Activated CD4-positive, alpha-beta memory T cell treated with anti-CD3 and anti-CD28 coated beads, Interleukin-2, amount 10 ng/mL, durations not matched to agents 7 days and 5 days (primary cell): ENCODE measurements at regions of chr15 and their contacts with region 1.

Region 1: GRCh38 chr15:51776952-51777574 is 25.7 kb downstream of the TMOD2 start:
- DNase-seq: peak; percentile 68
- H3K4me3 Mint-ChIP-seq: no peak overlapping the region
- H3K27ac Mint-ChIP-seq: no peak overlapping the region
- H3K4me1 Mint-ChIP-seq: peaks cover 4% of the 10 kb centered on the region
- H3K27me3 Mint-ChIP-seq: no peaks in the 10 kb centered on the region

Region 2: DNA sequence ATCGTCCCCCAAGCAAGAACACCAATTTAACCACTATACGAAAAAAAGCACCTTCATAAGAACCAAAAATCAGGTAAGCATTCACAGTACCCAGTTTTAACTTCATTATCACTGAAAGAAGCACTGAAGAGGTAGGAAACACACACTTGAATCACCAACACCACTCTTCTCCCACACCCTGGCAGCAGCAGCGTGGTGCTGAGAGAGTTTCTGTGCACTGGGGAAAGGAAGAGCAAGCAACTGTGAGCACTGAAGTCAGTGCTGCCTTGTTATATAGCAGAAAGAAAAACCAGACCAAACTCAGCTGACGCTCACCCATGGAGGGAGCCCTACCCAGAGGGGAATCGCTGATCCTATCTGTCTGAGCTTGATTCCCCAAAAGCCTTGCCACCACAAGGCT is 252.7 kb before region 1 on chr15:
- CTCF ChIA-PET with region 1: no interaction called
- POLR2A ChIA-PET with region 1: no interaction called
- DNase-seq: no peak
- H3K4me3 Mint-ChIP-seq: no peak overlapping the region
- H3K27ac Mint-ChIP-seq: no peak overlapping the region
- H3K4me1 Mint-ChIP-seq: no peaks in the 10 kb centered on the region
- H3K27me3 Mint-ChIP-seq: no peaks in the 10 kb centered on the region

Region 3: GRCh38 chr15:51621936-51622603 is 155.0 kb before region 1 on chr15:
- CTCF ChIA-PET with region 1: interaction called, 15 read pairs
- POLR2A ChIA-PET with region 1: no interaction called
- DNase-seq: peak; percentile 35
- H3K4me3 Mint-ChIP-seq: peak overlapping the region; percentile 85
- H3K27ac Mint-ChIP-seq: no peak overlapping the region
- H3K4me1 Mint-ChIP-seq: peaks cover 14% of the 10 kb centered on the region
- H3K27me3 Mint-ChIP-seq: peaks cover 28% of the 10 kb centered on the region

Region 4: DNA sequence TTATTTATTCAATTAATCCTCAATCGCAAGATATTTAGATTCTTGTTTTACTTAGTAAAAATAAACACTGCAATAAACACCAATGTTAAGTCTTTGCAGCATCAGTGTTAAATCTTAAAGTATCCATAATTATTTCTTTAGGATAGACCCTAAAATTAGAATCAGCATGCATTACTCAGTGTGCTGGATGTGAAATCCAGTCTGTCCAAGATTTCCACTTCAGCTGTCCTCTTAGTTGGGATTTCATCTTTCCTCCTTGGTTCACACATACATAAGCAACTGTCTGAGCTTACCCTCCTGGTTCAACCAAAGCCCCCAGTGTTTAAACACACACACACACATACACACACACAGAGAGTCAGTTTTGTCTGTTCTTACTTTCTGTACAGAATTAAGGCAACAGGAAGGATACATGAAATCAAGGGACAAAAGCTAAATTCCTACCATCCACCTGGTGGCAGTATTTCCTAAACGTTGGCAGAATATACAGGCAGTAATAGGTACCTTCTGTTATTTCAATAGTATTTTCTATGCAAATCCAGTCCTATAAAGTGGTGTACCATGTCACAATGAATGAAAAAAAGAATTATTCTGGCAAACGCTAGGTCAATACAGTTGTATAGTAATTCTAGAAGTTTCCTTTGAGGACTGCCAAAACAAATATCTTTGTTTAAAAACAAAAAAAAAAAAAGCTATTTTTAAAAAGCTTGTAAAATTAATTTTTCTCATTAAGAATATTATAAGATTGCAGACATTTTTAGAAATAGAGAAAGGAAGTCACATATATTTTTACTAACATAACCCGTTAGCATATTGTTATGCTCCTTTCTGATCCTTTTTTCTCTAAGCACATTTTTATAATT is 127.2 kb before region 1 on chr15:
- CTCF ChIA-PET with region 1: interaction called, 230 read pairs
- POLR2A ChIA-PET with region 1: interaction called, 13 read pairs
- DNase-seq: peak; percentile 32
- H3K4me3 Mint-ChIP-seq: no peak overlapping the region
- H3K27ac Mint-ChIP-seq: no peak overlapping the region
- H3K4me1 Mint-ChIP-seq: peaks cover 4% of the 10 kb centered on the region
- H3K27me3 Mint-ChIP-seq: peaks cover 8% of the 10 kb centered on the region

Region 5: DNA sequence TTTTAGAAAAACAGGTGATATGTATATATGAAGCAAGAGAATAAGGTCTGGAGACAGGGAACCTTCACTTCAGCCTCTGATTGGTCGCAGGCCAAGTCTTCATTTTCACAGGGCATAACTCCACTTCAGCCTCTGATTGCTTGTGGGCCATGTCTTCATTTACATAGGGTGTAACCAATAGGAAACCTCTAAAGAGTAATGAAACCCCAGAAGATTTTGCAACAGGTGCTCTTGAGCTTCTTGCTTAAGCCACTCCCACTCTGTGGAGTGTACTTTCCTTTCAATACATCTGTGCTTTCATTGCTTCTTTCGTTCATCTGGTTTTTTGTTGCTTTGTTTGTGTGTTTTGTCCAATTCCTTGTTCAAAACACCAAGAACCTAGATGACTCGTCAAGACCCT is 118.4 kb before region 1 on chr15:
- CTCF ChIA-PET with region 1: interaction called, 33 read pairs
- POLR2A ChIA-PET with region 1: no interaction called
- DNase-seq: no peak
- H3K4me3 Mint-ChIP-seq: no peak overlapping the region
- H3K27ac Mint-ChIP-seq: no peak overlapping the region
- H3K4me1 Mint-ChIP-seq: no peaks in the 10 kb centered on the region
- H3K27me3 Mint-ChIP-seq: peaks cover 6% of the 10 kb centered on the region

Region 6: GRCh38 chr15:51737280-51738017 is 39.6 kb before region 1 on chr15 and contains the start of gene LYSMD2:
- CTCF ChIA-PET with region 1: interaction called, 16 read pairs
- POLR2A ChIA-PET with region 1: interaction called, 6 read pairs
- DNase-seq: peak; percentile 68
- H3K4me3 Mint-ChIP-seq: peak within 1 kb of the TSS; percentile 81
- H3K27ac Mint-ChIP-seq: peak within 1 kb of the TSS; percentile 80
- H3K4me1 Mint-ChIP-seq: peaks cover 47% of the 10 kb centered on the region
- H3K27me3 Mint-ChIP-seq: no peaks in the 10 kb centered on the region
- total RNA-seq, gene LYSMD2: 14.8 to 14.9 TPM

Region 7: DNA sequence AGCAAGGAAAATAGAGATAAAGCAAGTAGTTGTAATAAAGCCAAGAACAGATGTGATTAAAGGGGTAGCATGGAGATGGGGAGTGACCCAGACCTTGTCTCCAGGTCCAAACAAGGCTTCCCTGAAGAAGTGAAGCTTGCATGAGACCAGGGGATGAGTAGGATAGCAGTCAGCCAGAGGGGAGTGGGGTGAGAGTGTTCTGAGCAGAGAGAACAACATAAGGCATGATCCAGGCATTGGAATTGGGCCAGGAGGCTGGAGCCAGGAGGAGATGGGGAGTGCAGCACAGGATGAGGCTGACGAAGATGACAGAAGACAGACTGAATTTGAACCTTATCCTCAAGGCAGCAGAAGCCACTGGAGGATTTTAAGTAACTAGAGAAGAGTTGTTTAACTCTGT is 18.4 kb before region 1 on chr15:
- CTCF ChIA-PET with region 1: interaction called, 18 read pairs
- POLR2A ChIA-PET with region 1: no interaction called
- DNase-seq: no peak
- H3K4me3 Mint-ChIP-seq: no peak overlapping the region
- H3K27ac Mint-ChIP-seq: no peak overlapping the region
- H3K4me1 Mint-ChIP-seq: peaks cover 8% of the 10 kb centered on the region
- H3K27me3 Mint-ChIP-seq: peaks cover 8% of the 10 kb centered on the region

Region 8: GRCh38 chr15:51765751-51766150 is 11.3 kb before region 1 on chr15:
- CTCF ChIA-PET with region 1: interaction called, 18 read pairs
- POLR2A ChIA-PET with region 1: interaction called, 3 read pairs
- DNase-seq: no peak
- H3K4me3 Mint-ChIP-seq: no peak overlapping the region
- H3K27ac Mint-ChIP-seq: no peak overlapping the region
- H3K4me1 Mint-ChIP-seq: peaks cover 7% of the 10 kb centered on the region
- H3K27me3 Mint-ChIP-seq: no peaks in the 10 kb centered on the region